Activated CD4-positive, alpha-beta T cell treated with anti-CD3 and anti-CD28 coated beads for 36 hours (primary cell): ENCODE measurements at regions of chr10 and their contacts with region 1.

Region 1: DNA sequence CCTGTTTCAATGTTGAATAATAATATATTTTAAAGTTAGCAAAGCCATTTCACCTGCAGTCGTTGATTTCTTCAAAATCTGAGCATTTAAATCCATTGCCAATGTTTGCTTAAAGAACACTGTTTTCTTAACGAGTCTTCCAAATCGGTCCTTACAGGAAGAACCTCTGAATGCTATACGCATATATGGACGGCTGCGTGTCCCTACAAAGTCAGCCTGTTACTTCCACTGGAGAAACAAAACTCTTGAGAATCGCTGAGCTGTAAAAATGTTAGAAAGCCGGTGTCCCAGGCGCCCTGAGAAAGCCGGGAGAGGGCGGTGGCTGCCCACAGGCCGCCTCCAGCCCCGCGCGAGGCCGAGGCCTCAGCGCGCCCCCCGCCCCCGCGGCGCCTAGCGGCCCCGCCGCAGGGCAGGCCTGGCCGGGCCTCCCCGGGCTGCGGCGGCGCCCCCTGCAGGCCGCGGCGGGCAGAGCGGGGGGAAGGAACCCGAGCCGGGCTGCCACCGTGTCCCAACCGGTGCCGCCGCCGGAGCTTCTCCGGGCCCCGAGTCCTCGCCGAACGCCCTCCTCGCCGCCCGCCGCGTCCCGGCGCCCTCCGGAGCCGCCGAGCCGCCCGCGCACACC is at the start of gene FHIP2A:
- DNase-seq: peak; percentile 89
- ATAC-seq: peak; percentile 87
- H3K4me3 Mint-ChIP-seq: peak within 1 kb of the TSS; percentile 95
- H3K27ac Mint-ChIP-seq: peak within 1 kb of the TSS; percentile 89
- H3K4me1 Mint-ChIP-seq: peaks cover 38% of the 10 kb centered on the region
- H3K27me3 Mint-ChIP-seq: peaks cover 2% of the 10 kb centered on the region
- total RNA-seq, gene FHIP2A: 18.4 to 18.6 TPM

Region 2: DNA sequence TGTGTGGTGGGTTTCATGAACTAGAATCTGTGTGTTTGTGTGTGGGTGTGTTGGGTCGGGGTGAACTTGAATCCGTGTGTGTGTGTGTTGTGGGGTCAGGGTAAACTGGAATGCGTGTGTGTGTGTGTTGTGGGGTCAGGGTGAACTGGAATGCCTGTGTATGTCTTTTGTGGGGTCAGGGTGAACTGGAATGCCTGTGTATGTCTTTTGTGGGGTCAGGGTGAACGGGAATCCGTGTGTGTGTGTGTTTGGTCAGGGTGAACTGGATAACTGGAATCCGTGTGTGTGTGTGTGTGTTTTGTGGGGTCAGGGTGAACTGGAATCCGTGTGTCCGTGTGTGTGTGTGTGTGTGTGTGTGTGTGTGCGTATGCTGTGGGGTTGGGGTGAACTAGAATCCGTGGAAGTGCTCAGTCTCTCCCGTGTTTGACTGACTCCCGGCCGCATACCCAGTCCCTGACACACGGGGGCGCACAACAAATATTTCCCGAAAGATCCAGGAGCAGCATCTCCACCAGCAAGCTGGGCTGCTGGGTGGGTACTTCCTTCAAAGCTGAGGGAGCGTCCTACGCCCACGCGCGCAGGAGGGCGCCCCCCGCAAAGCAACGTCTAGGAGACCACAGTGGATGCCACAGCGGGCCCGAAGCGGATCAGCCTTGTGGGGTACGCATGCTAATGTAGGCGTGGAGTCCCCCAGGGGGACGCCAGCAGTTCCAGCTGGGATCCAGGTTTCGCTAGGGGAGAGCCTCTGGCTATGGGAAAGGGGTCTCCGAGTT is 1142.5 kb before region 1 on chr10:
- CTCF ChIA-PET with region 1: no interaction called
- POLR2A ChIA-PET with region 1: no interaction called
- intact Hi-C with region 1: loop called in 1 of 2 experiments (anchors 5 kb)
- DNase-seq: peak; percentile 84
- ATAC-seq: peak; percentile 16
- H3K4me3 Mint-ChIP-seq: peak overlapping the region; percentile 80
- H3K27ac Mint-ChIP-seq: peak overlapping the region; percentile 74
- H3K4me1 Mint-ChIP-seq: peaks cover 39% of the 10 kb centered on the region
- H3K27me3 Mint-ChIP-seq: peaks cover 5% of the 10 kb centered on the region

Region 3: GRCh38 chr10:114173921-114174694 is 647.3 kb before region 1 on chr10 and contains the start of gene CCDC186:
- CTCF ChIA-PET with region 1: no interaction called
- POLR2A ChIA-PET with region 1: no interaction called
- intact Hi-C with region 1: loop called in 1 of 2 experiments (anchors 5 kb)
- DNase-seq: peak; percentile 99
- ATAC-seq: peak; percentile 100
- H3K4me3 Mint-ChIP-seq: peak within 1 kb of the TSS; percentile 100
- H3K27ac Mint-ChIP-seq: peak within 1 kb of the TSS; percentile 99
- H3K4me1 Mint-ChIP-seq: peaks cover 32% of the 10 kb centered on the region
- H3K27me3 Mint-ChIP-seq: no peaks in the 10 kb centered on the region
- total RNA-seq, gene CCDC186: 9.1 to 13.9 TPM

Region 4: GRCh38 chr10:114437456-114438292 is 383.7 kb before region 1 on chr10:
- CTCF ChIA-PET with region 1: no interaction called
- POLR2A ChIA-PET with region 1: no interaction called
- intact Hi-C with region 1: no loop called
- DNase-seq: no peak
- ATAC-seq: no peak
- H3K4me3 Mint-ChIP-seq: no peak overlapping the region
- H3K27ac Mint-ChIP-seq: peak overlapping the region; percentile 5
- H3K4me1 Mint-ChIP-seq: no peaks in the 10 kb centered on the region
- H3K27me3 Mint-ChIP-seq: no peaks in the 10 kb centered on the region

Region 5: GRCh38 chr10:114507449-114507848 is 314.0 kb before region 1 on chr10:
- CTCF ChIA-PET with region 1: no interaction called
- POLR2A ChIA-PET with region 1: no interaction called
- intact Hi-C with region 1: no loop called
- DNase-seq: no peak
- ATAC-seq: no peak
- H3K4me3 Mint-ChIP-seq: no peak overlapping the region
- H3K27ac Mint-ChIP-seq: peak overlapping the region; percentile 84
- H3K4me1 Mint-ChIP-seq: peaks cover 85% of the 10 kb centered on the region
- H3K27me3 Mint-ChIP-seq: no peaks in the 10 kb centered on the region

Region 6: GRCh38 chr10:114541081-114541796 is 280.2 kb before region 1 on chr10:
- CTCF ChIA-PET with region 1: interaction called, 5 read pairs
- POLR2A ChIA-PET with region 1: interaction called, 5 read pairs
- intact Hi-C with region 1: loop called in 1 of 2 experiments (anchors 2 kb)
- DNase-seq: peak; percentile 85
- ATAC-seq: peak; percentile 84
- H3K4me3 Mint-ChIP-seq: peak overlapping the region; percentile 55
- H3K27ac Mint-ChIP-seq: peak overlapping the region; percentile 99
- H3K4me1 Mint-ChIP-seq: peaks cover 90% of the 10 kb centered on the region
- H3K27me3 Mint-ChIP-seq: no peaks in the 10 kb centered on the region

Region 7: GRCh38 chr10:114810926-114811325 is 10.5 kb before region 1 on chr10:
- CTCF ChIA-PET with region 1: interaction called, 11 read pairs
- POLR2A ChIA-PET with region 1: no interaction called
- intact Hi-C with region 1: no loop called
- DNase-seq: no peak
- ATAC-seq: peak; percentile 87
- H3K4me3 Mint-ChIP-seq: no peak overlapping the region
- H3K27ac Mint-ChIP-seq: no peak overlapping the region
- H3K4me1 Mint-ChIP-seq: peaks cover 20% of the 10 kb centered on the region
- H3K27me3 Mint-ChIP-seq: no peaks in the 10 kb centered on the region

Region 8: DNA sequence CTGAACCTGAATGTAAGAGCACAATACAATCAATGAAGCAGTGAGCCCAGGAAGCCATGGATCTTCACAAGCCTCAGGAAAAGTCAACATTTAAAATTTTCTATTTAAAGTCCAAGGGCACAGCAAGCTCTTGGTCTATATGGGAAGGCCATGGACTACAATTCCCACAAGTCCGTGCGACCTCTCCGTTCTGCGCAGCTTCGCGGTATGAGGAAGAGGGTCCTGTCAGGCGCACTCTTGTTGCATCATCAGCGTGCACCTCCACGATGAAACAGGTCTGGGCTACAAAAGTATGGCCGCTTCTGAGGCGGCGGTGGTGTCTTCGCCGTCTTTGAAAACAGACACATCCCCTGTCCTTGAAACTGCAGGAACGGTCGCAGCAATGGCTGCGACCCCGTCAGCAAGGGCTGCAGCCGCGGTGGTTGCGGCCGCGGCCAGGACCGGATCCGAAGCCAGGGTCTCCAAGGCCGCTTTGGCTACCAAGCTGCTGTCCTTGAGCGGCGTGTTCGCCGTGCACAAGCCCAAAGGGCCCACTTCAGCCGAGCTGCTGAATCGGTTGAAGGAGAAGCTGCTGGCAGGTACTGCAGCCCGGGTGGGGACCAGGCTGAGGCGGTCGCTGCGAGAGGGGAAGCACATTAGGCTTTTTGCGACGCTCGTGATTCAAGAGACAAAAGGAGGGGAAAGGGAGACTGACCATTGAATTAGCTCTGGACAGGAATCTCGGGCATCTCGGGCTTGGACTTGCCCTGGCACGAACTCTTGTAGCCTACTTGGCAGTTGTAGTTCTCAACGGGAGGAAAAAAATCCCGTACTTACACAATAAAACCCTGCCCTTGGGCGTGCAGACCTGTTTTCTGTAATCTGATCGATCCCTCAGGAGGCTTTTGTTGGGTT is 116.8 kb after region 1 on chr10 and contains the start of gene TRUB1:
- CTCF ChIA-PET with region 1: no interaction called
- POLR2A ChIA-PET with region 1: interaction called, 5 read pairs
- intact Hi-C with region 1: loop called (anchors 2 to 10 kb)
- DNase-seq: peak; percentile 95
- ATAC-seq: peak; percentile 100
- H3K4me3 Mint-ChIP-seq: peak within 1 kb of the TSS; percentile 96
- H3K27ac Mint-ChIP-seq: peak within 1 kb of the TSS; percentile 94
- H3K4me1 Mint-ChIP-seq: peaks cover 25% of the 10 kb centered on the region
- H3K27me3 Mint-ChIP-seq: no peaks in the 10 kb centered on the region
- total RNA-seq, gene TRUB1: 13.4 to 15.0 TPM

Region 9: DNA sequence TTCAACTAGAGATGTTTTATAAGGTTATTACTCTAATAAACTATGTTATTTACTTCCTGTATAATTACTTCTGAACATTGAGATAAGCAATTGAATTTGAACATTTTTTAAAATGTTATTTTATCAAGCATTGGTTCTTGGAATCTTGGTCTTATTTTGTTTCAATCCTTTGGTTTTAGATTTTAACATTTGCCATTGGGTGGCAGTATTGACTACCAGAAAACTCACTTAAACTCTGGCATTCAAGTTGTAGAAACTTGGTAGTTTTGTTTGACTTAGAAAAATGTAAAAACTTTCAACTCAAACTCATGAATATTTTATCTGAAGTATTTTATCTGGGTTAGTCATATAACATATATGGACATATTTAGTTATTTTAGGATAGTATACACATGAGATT is 319.9 kb after region 1 on chr10:
- CTCF ChIA-PET with region 1: no interaction called
- POLR2A ChIA-PET with region 1: no interaction called
- intact Hi-C with region 1: no loop called
- DNase-seq: no peak
- ATAC-seq: no peak
- H3K4me3 Mint-ChIP-seq: no peak overlapping the region
- H3K27ac Mint-ChIP-seq: no peak overlapping the region
- H3K4me1 Mint-ChIP-seq: no peaks in the 10 kb centered on the region
- H3K27me3 Mint-ChIP-seq: peaks cover 15% of the 10 kb centered on the region